ENCODE measurements at regions of chr15 and their contacts with region 1.

Region 1: DNA sequence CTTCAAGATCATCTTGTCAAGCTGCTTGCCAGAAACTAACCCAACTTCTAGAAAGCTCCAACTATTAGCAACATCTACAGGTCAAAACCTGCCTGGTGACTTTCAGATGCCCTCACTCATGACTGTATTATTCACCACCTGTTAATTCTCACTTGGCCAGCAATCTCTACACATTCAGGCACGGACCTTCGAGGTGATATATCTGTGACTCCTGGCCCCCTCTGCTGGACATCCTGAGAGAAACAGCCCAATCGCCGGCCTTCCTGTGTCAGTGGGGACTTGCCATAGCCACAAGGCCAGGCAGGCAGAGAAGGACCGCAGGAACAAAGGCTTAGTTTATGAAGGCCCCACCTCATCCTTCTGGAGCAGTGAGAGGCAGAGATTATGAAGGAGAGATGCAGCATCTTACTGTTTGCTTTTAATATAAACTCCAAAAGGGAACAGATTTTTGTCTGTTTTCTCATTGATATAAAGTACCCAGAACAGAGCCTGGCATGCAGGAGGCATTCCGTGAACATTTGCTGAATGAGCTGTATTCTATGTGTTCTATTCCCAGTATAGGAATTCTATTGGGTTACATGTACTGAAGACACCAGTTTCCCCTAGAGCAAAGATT is 24.4 kb upstream of the OCA2 start:
- DNase-seq: peak; percentile 73
- H3K4me3 ChIP-seq: no peak overlapping the region
- H3K27ac ChIP-seq: no peak overlapping the region
- H3K4me1 ChIP-seq: no peaks in the 10 kb centered on the region
- H3K27me3 ChIP-seq: no peaks in the 10 kb centered on the region
- CTCF ChIP-seq: peak; percentile 62

Region 2: GRCh38 chr15:26889298-26889898 is 1234.1 kb before region 1 on chr15:
- intact Hi-C with region 1: loop called (anchors 10 kb)
- DNase-seq: peak; percentile 51
- H3K4me3 ChIP-seq: no peak overlapping the region
- H3K27ac ChIP-seq: no peak overlapping the region
- H3K4me1 ChIP-seq: no peaks in the 10 kb centered on the region
- H3K27me3 ChIP-seq: no peaks in the 10 kb centered on the region
- CTCF ChIP-seq: peak; percentile 62

Region 3: DNA sequence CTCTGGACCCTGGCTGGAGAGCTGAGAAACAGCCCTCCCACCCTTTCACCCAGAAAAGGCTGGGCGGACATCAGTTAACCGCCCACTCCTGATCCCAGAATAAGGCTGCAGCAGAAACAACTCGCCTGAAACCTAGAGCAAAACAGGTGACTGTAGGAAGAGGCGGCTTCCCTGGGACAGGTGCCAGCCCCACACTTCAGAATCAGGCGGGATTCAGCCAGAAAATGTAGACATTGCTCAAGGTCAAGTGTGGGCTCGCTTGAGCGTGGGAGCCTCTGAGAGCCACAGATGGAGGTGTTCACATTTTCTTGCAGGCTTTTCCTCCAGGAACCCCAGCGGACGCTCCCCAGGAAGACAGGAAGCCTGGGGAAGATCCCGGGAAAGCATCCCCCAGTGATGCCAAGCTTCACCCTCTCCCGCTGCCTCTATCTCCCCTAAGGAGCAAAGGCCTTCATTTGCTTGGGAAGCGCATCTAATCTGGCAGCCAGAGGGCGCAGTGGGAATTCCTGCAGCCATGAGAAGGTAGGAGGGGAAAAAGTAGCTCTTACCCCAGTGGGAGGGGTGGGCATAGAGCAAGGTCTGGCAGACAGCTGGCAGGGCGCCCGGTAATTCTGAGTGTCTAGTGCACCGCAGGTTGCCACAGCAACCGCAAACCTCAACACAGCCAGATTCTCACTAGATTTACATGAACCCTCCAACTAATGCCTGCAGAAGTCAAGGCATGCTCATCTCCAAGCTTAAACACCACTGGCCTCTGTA is 102.1 kb before region 1 on chr15:
- intact Hi-C with region 1: loop called (anchors 2 kb)
- DNase-seq: peak; percentile 55
- H3K4me3 ChIP-seq: no peak overlapping the region
- H3K27ac ChIP-seq: no peak overlapping the region
- H3K4me1 ChIP-seq: no peaks in the 10 kb centered on the region
- H3K27me3 ChIP-seq: no peaks in the 10 kb centered on the region
- CTCF ChIP-seq: peak; percentile 36

Region 4: DNA sequence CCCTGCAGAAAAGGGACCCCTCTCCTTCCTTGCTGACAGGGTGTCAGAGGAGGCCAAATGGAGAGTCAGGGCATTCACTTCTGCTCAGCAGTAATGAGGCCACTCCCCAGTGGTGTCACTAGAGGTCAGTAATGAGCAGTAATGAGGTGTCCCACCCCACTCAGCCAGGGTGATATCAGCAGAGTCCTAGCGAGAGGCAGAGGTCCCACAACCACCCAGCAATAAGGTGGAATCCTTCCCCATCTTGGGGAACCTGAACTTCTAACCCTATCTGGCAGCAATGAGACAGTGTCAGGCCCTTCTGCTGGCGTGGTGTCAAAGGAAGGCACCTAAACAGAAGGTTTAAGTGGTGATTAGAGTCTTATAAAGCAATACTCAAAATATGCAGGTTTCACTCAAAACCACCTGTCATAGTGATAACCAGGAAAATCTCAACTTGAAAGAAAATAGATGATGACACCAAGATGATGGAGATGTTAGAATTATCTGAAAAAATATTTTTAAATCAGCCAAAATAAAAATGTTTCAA is 37.3 kb before region 1 on chr15:
- intact Hi-C with region 1: loop called (anchors 5 kb)
- DNase-seq: peak; percentile 70
- H3K4me3 ChIP-seq: no peak overlapping the region
- H3K27ac ChIP-seq: no peak overlapping the region
- H3K4me1 ChIP-seq: no peaks in the 10 kb centered on the region
- H3K27me3 ChIP-seq: no peaks in the 10 kb centered on the region
- CTCF ChIP-seq: peak; percentile 76

Measured in colonic mucosa (tissue), 4 donors.